Endothelial cell of umbilical vein (primary cell): ENCODE measurements at regions of chr5 and their contacts with region 1.

Region 1: DNA sequence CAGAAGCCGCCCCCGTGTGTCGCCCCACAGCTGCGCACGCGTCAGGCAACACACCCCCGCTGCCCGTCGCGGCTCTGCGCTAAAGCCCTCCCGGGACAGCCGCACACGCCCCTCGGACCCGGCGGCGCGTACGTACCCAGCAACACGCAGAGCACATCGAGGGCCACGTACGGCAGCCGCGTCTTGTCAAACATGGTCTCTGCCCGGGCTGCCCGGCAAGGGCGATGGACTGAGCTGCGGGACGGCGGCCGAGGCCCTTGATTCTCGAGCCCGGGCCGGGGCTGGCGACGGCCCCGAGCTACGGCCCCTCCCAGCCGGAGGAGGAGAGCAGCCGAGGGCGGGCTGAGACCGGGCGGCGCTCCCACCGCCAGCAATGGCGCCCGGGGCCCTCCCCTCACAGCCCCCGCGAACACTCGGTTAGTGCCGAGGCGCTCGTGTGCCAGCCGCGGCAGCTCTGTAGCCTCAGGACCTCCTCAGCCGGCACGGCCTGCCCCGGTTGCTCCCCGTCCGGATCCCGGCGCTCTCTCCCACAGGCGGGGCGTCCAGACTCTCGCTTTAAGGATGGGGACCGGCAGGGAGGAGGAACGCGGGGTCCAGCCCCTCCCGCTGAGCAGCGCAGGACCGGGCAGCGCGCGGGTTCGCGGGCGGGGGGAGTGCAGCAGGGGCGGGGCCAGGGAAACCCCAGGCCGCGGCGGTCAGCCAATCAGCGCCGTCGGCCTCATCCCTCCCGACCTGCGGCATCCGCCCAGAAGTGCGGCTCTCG is at the start of gene PLPP1:
- DNase-seq: peak; percentile 92
- H3K4me3 ChIP-seq: peak within 1 kb of the TSS; percentile 60 to 82 (median 64)
- H3K27ac ChIP-seq: peak within 1 kb of the TSS; percentile 79
- H3K4me1 ChIP-seq: peaks cover 11% of the 10 kb centered on the region
- H3K27me3 ChIP-seq: no peaks in the 10 kb centered on the region
- CTCF ChIP-seq: no peak
- POLR2A ChIP-seq: peak; percentile 85
- total RNA-seq, gene PLPP1: 14.3 and 14.6 TPM in 2 replicates

Region 2: DNA sequence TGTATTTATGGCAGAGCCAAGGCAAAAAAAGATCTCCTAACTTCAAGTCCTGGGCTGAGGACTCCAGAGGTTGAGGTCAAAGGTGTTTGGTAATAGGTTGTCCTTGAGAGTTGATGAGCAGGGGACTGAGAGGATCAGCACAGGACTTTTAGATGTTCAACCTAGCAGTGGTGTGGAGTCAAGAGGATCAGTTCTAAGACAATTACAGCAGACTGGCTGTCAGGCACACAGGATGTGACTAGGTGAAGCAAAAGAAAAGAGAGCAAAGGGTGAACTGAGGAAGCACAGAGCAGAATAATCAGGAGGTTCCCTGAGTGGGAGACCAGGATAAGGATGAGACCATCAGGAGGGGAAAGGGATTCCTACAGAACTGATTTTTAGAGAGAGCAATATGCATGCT is 421.3 kb before region 1 on chr5:
- CTCF ChIA-PET with region 1: no interaction called
- POLR2A ChIA-PET with region 1: no interaction called
- dilution Hi-C with region 1: no loop called
- intact Hi-C with region 1: no loop called
- DNase-seq: no peak
- H3K4me3 ChIP-seq: no peak overlapping the region
- H3K27ac ChIP-seq: no peak overlapping the region
- H3K4me1 ChIP-seq: no peaks in the 10 kb centered on the region
- H3K27me3 ChIP-seq: no peaks in the 10 kb centered on the region
- CTCF ChIP-seq: no peak
- POLR2A ChIP-seq: no peak

Region 3: DNA sequence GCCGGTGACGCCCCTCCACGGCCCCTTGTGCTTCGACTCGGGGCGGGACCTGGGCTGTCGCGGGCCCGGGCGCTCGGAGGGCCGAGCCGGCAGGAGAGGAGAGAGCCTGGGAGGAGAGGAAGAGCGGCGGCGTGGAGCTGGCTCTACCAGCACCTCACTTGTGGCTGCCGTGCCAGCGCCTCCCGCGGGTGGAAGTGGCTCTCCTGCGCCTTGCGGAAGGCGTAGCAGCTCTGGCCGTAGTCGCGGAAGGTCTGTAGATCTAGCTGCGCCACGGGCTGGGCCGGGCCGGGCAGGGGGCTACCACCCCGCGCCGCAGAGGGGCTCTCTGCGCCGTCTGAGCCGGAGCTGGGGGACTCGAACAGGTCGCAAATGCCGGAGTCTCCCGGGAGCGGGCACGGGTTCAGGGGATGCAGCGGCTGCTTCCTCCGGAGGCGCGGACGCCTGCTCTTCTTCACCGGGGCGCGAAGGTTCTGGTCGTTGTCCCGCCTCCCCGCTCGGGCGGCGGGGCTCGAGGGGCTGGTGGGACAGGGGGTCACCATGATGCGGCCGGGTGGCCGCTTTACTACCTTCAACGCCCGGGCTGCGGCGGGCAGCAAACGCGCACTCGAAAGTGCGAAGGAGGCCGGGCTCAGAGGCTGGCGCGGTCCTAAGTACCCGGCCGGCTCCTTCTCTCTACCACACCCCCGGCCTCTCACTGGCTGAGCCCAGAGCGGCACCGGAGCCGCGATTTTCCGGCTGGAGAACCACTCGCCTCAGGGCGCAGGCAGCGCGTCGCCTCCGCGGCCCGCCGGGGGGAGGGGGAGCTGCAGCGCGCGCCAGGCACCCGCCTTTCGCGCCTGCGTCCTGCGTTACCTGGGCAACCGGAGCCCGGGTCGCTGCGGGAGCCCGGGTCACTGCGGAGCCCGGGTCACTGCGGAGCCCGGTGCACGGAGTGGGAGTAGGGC is 301.4 kb before region 1 on chr5 and contains the start of gene CCNO:
- CTCF ChIA-PET with region 1: no interaction called
- POLR2A ChIA-PET with region 1: no interaction called
- dilution Hi-C with region 1: no loop called
- intact Hi-C with region 1: loop called (anchors 5 kb)
- DNase-seq: peak; percentile 83
- H3K4me3 ChIP-seq: peak within 1 kb of the TSS; percentile 44 to 70 (median 53)
- H3K27ac ChIP-seq: no peak within 1 kb of the TSS
- H3K4me1 ChIP-seq: peaks cover 26% of the 10 kb centered on the region
- H3K27me3 ChIP-seq: peaks cover 45% of the 10 kb centered on the region in 2 experiments
- CTCF ChIP-seq: no peak
- POLR2A ChIP-seq: no peak
- total RNA-seq, gene CCNO: 0.58 and 0.88 TPM in 2 replicates

Region 4: DNA sequence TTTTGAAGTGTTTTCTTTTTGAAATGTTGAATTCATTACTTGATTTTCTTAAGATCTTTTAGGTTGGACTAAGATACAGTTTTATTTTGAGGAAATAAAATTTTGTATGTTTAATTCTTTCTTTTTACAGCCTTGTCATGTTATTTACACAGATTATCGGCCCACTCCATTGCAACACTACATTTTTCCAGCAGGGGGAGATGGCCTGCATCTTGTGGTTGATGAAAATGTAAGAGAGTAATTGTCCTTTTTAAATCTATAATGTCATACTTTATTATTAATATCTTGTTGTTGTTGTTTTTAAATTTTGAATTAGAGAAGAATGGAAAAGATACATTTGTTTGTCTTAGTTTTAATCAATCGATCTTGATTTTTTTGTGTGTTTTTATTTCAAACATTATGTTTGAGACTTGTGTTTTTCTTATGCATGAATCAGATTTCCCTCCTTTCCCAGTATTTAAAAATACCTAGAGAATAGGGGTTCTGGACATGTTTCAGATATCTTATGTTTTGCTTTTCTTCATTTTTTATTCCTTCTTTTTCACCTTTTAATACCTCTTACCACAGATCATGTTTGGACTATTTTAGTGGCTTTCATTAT is 190.1 kb before region 1 on chr5:
- CTCF ChIA-PET with region 1: no interaction called
- POLR2A ChIA-PET with region 1: no interaction called
- dilution Hi-C with region 1: no loop called
- intact Hi-C with region 1: loop called (anchors 10 kb)
- DNase-seq: peak; percentile 86
- H3K4me3 ChIP-seq: no peak overlapping the region
- H3K27ac ChIP-seq: no peak overlapping the region
- H3K4me1 ChIP-seq: peaks cover 3% of the 10 kb centered on the region
- H3K27me3 ChIP-seq: no peaks in the 10 kb centered on the region
- CTCF ChIP-seq: peak; percentile 57 to 66
- POLR2A ChIP-seq: no peak

Region 5: DNA sequence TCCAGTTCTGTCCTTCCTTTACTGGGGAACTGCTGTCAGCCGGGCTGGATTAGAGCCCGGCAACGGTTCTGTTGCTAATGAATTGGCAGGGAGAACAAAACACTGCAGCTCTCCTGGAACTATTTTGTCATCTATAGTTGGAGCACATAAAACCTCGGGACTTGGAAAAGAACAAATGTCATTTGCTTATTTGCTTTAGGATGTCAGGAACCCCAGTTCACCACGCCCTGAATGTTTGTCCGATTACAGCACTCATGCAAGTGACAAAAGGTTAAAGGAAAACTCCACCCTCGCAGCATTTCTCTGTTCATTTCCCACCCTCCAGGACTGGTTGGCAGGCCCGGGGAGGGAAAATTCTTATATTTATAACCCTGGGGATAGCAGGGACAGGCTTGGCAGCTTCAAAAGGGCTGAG is 66.6 kb after region 1 on chr5:
- CTCF ChIA-PET with region 1: no interaction called
- POLR2A ChIA-PET with region 1: no interaction called
- dilution Hi-C with region 1: no loop called
- intact Hi-C with region 1: loop called (anchors 2 kb)
- DNase-seq: peak; percentile 83
- H3K4me3 ChIP-seq: peak overlapping the region in 1 of 3 experiments; percentile 40
- H3K27ac ChIP-seq: peak overlapping the region; percentile 92
- H3K4me1 ChIP-seq: peaks cover 35% of the 10 kb centered on the region
- H3K27me3 ChIP-seq: no peaks in the 10 kb centered on the region
- CTCF ChIP-seq: no peak
- POLR2A ChIP-seq: no peak